T-cell (primary cell): ENCODE measurements at regions of chr2 and their contacts with region 1.

Region 1: DNA sequence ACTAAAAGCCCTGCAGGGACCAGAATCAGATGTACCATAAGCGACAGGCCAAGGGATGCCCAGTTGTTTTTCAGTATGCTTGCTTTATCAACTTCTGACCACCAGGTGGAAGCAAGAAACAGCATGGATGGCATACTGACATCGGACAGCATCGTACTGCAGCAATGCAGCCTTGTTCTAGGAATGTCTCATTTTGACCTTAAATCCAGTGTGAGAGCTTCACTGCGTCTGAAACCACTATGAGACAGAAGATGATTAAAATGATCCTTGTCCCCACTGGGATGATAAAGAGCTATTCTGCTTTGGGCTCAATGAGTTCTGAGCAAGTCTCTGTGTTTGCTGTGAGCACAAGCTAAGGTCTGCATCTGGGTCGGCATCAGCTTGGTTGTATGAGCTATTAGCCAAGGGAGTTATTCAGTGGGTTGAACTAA is 54.3 kb downstream of the CDK15 start:
- DNase-seq: peak in 19 of 35 experiments; percentile 1 to 70 (median 21)
- ATAC-seq: peak; percentile 63 to 83 (median 73)
- H3K4me3 ChIP-seq: no peak overlapping the region
- H3K4me3 Mint-ChIP-seq: no peak overlapping the region
- H3K27ac ChIP-seq: no peak overlapping the region
- H3K27ac Mint-ChIP-seq: no peak overlapping the region
- H3K4me1 ChIP-seq: peaks cover 2 to 8% of the 10 kb centered on the region in 2 experiments
- H3K4me1 Mint-ChIP-seq: peaks cover 13 to 18% (median 17%) of the 10 kb centered on the region in 3 donors
- H3K27me3 ChIP-seq: peaks cover 9 to 26% of the 10 kb centered on the region in 2 experiments
- H3K27me3 Mint-ChIP-seq: peaks cover 30 to 32% of the 10 kb centered on the region in 2 donors

Region 2: DNA sequence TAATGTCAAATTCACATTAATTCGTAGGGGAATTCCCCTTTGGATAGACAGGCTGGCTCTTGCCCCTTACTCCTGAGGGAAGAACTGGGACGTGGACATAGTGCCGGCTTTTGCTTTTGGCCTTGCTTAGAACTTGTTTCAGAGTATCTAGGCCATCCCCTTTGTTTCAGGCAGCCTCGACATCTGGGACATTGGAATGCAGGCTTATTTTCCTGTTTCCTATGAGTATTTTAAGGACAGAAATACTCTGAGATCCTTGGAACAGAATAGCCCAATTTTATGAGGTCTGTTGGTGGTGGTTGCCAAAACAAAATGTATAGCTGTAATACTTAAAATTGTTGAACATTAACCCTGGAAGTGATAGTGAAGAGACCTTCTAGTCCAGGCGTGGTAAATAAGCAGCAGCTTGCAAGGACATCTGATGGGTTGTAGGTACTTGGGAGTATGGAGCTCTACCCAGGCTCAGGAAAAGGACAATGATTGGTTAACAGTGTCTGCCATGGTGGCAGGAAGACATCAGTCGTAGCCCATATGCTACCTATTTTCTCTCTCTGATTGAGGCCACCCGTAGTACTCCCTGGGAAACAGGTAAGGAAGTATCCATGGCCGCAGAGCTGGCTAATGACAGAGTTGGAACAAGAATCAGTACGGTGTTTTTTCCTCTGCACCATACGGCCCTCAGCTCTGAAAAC is 58.1 kb after region 1 on chr2:
- CTCF ChIA-PET with region 1: no interaction called
- POLR2A ChIA-PET with region 1: no interaction called
- DNase-seq: no peak
- ATAC-seq: no peak
- H3K4me3 ChIP-seq: no peak overlapping the region
- H3K4me3 Mint-ChIP-seq: no peak overlapping the region
- H3K27ac ChIP-seq: no peak overlapping the region
- H3K27ac Mint-ChIP-seq: no peak overlapping the region
- H3K4me1 ChIP-seq: no peaks in the 10 kb centered on the region
- H3K4me1 Mint-ChIP-seq: no peaks in the 10 kb centered on the region
- H3K27me3 ChIP-seq: peaks cover 0 to 9% of the 10 kb centered on the region in 2 experiments
- H3K27me3 Mint-ChIP-seq: peaks cover 8 to 9% of the 10 kb centered on the region in 2 donors

Region 3: DNA sequence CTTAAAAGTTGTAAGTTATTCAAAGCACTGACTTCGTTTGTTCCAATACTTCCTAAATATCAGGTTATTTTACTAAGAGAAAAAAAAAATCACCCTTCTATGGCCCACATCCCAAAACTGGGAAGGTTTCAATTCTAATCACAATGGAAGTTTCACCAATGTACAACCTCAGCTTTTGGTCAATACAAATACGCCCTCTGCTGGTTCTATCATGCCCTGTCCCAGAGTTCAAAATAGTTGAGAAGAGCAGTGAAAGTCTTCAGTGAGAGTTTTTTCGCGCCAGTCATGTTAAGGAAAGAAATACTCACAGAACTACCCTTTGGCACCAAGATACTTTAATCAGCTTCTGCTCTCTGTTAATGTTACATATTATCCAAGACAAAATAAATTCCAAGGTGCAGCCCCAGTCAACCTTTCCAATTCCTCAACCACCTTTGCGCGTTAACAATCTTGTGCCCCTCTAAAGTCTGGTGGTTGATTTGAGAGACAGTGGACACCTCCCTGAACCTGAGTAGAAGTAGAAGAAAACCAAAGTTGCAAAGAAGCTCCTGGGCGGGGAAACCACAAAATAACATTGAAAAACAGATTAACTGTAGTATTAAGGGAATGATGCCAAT is 317.8 kb after region 1 on chr2:
- CTCF ChIA-PET with region 1: interaction called, 18 to 25 read pairs
- POLR2A ChIA-PET with region 1: no interaction called
- DNase-seq: peak in 28 of 35 experiments; percentile 8 to 73 (median 32)
- ATAC-seq: peak; percentile 43 to 73 (median 64)
- H3K4me3 ChIP-seq: no peak overlapping the region
- H3K4me3 Mint-ChIP-seq: no peak overlapping the region
- H3K27ac ChIP-seq: no peak overlapping the region
- H3K27ac Mint-ChIP-seq: no peak overlapping the region
- H3K4me1 ChIP-seq: no peaks in the 10 kb centered on the region
- H3K4me1 Mint-ChIP-seq: no peaks in the 10 kb centered on the region
- H3K27me3 ChIP-seq: peaks cover 0 to 3% of the 10 kb centered on the region in 2 experiments
- H3K27me3 Mint-ChIP-seq: peaks cover 4 to 10% of the 10 kb centered on the region in 2 donors

Region 4: GRCh38 chr2:202529389-202529788 is 668.7 kb after region 1 on chr2:
- CTCF ChIA-PET with region 1: no interaction called
- POLR2A ChIA-PET with region 1: no interaction called
- DNase-seq: no peak
- ATAC-seq: no peak
- H3K4me3 ChIP-seq: no peak overlapping the region
- H3K4me3 Mint-ChIP-seq: peak overlapping the region in 1 of 3 donors; percentile 54
- H3K27ac ChIP-seq: no peak overlapping the region
- H3K27ac Mint-ChIP-seq: peak overlapping the region in 1 of 2 donors; percentile 46
- H3K4me1 ChIP-seq: peaks cover 4 to 16% of the 10 kb centered on the region in 2 experiments
- H3K4me1 Mint-ChIP-seq: peaks cover 21 to 24% (median 23%) of the 10 kb centered on the region in 3 donors
- H3K27me3 ChIP-seq: no peaks in the 10 kb centered on the region
- H3K27me3 Mint-ChIP-seq: no peaks in the 10 kb centered on the region